WTC11 (cell line): ENCODE measurements at regions of chr17 and their contacts with region 1.

Region 1: GRCh38 chr17:47840740-47841603 is at the start of gene SCRN2:
- DNase-seq: peak; percentile 97
- ATAC-seq: peak; percentile 95
- H3K4me3 Mint-ChIP-seq: peak within 1 kb of the TSS; percentile 95
- H3K27ac Mint-ChIP-seq: peak within 1 kb of the TSS; percentile 80; the same call in 1 of the 2 replicates
- H3K4me1 Mint-ChIP-seq: peaks cover 41% of the 10 kb centered on the region
- H3K27me3 Mint-ChIP-seq: peaks cover 19% of the 10 kb centered on the region
- CTCF ChIP-seq: peak; percentile 87
- total RNA-seq, gene SCRN2: 50.8 to 54.1 TPM (median 51.6 TPM) in 3 replicates

Region 2: GRCh38 chr17:47810205-47810821 is 30.7 kb before region 1 on chr17:
- CTCF ChIA-PET with region 1: no interaction called
- POLR2A ChIA-PET with region 1: no interaction called
- DNase-seq: peak; percentile 55
- ATAC-seq: peak; percentile 83
- H3K4me3 Mint-ChIP-seq: no peak overlapping the region
- H3K27ac Mint-ChIP-seq: no peak overlapping the region; the same call in 1 of the 2 replicates
- H3K4me1 Mint-ChIP-seq: peaks cover 6% of the 10 kb centered on the region
- H3K27me3 Mint-ChIP-seq: no peaks in the 10 kb centered on the region
- CTCF ChIP-seq: no peak

Region 3: DNA sequence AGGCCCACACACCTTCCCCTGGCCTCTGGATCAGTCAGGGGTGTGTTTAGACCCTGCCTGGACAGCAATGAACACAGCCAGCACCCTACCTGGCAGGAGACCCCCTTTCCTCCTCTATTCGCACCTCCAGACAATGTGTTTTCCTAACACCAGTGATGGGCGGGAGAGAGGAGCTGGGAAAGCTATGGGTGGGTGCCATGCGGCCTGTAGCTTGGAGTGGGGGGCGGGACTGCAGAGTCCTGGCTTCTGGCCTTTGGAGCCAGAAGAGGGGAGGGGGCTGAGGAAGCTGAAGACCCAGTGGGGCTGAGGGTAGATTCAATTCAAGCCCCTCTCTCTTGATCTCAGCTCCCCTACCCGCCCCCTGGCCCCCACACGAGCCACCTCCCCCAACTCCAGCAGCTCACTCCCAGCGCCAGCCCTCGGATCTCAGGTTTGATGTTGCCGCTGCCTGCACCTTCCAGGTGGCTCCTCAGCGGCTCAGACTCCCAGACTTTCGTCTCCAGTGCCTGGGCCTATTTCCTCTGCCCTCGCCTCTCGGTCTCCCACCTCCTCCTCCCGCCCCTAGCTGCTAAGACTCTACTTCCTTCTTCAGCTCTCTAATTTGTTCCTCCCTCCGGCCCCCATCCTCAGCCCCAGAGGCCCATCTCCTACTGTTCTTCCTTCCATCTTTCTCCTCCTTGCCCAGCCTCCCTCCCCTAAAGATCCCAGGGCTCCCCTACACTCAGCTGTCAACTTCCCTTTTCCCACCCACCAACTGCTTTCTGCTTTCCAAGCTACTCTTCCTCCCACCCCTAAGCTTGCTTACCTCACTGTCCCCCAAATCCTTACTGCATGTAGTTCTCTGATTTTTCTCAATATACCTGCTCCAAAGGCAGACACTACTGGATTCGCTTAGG is 16.8 kb after region 1 on chr17:
- CTCF ChIA-PET with region 1: interaction called, 58 read pairs
- POLR2A ChIA-PET with region 1: no interaction called
- DNase-seq: no peak
- ATAC-seq: peak; percentile 75
- H3K4me3 Mint-ChIP-seq: no peak overlapping the region
- H3K27ac Mint-ChIP-seq: no peak overlapping the region
- H3K4me1 Mint-ChIP-seq: peaks cover 42% of the 10 kb centered on the region
- H3K27me3 Mint-ChIP-seq: peaks cover 66% of the 10 kb centered on the region
- CTCF ChIP-seq: no peak

Region 4: GRCh38 chr17:47895856-47896671 is 55.1 kb after region 1 on chr17 and contains the start of gene SP2:
- CTCF ChIA-PET with region 1: interaction called, 1,122 read pairs
- POLR2A ChIA-PET with region 1: interaction called, 8 read pairs
- DNase-seq: peak; percentile 99
- ATAC-seq: peak; percentile 95
- H3K4me3 Mint-ChIP-seq: peak within 1 kb of the TSS; percentile 97
- H3K27ac Mint-ChIP-seq: peak within 1 kb of the TSS; percentile 96
- H3K4me1 Mint-ChIP-seq: peaks cover 37% of the 10 kb centered on the region
- H3K27me3 Mint-ChIP-seq: no peaks in the 10 kb centered on the region
- CTCF ChIP-seq: no peak
- total RNA-seq, gene SP2: 9.9 to 11.5 TPM (median 10.7 TPM) in 3 replicates

Region 5: DNA sequence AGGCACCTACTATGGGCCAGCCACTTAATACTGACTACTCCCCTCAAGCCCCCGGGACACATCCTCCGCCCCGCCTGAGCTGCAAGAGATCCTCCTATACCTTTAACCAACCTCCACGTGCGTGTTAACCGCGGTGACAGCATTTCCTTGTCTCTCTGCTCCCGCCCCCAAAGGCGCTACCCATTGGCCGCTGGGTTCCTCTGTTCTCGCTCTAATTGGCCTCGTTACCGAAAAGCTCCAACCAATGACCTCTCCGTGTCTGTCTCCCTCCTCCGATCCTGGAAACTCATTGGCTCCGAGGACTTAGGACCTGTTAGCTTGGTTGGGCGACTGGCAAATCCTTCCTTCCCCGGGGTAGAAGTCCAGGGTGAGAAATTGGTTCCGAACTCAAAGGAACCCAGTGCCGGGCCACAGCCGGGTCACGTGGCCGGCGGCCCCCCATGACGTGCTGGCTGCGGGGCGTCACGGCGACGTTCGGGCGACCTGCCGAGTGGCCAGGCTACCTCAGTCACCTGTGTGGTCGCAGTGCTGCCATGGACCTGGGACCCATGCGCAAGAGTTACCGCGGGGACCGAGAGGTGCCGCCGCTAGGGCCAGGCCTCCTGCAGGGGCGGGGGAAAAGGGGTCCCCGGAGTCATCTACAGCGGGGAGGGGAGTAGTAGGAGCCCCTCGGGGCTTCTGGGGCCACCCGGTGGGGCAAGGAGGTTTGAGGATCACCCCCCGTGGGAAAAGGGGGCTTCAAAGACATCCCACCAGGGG is 100.4 kb after region 1 on chr17 and contains the start of gene PNPO:
- CTCF ChIA-PET with region 1: interaction called, 29 read pairs
- POLR2A ChIA-PET with region 1: no interaction called
- DNase-seq: peak; percentile 90
- ATAC-seq: peak; percentile 99
- H3K4me3 Mint-ChIP-seq: peak within 1 kb of the TSS; percentile 80
- H3K27ac Mint-ChIP-seq: no peak within 1 kb of the TSS
- H3K4me1 Mint-ChIP-seq: peaks cover 14% of the 10 kb centered on the region
- H3K27me3 Mint-ChIP-seq: peaks cover 30% of the 10 kb centered on the region
- CTCF ChIP-seq: no peak
- total RNA-seq, gene PNPO: 12.2 to 17.8 TPM (median 17.2 TPM) in 3 replicates

Region 6: GRCh38 chr17:47957591-47958428 is 116.8 kb after region 1 on chr17 and contains the start of gene PRR15L:
- CTCF ChIA-PET with region 1: interaction called, 13 read pairs
- POLR2A ChIA-PET with region 1: no interaction called
- DNase-seq: peak; percentile 66
- ATAC-seq: peak; percentile 80
- H3K4me3 Mint-ChIP-seq: peak within 1 kb of the TSS; percentile 45
- H3K27ac Mint-ChIP-seq: peak within 1 kb of the TSS; percentile 70
- H3K4me1 Mint-ChIP-seq: peaks cover 29% of the 10 kb centered on the region
- H3K27me3 Mint-ChIP-seq: peaks cover 15% of the 10 kb centered on the region
- CTCF ChIP-seq: no peak
- total RNA-seq, gene PRR15L: 0.59 to 1.1 TPM (median 1.1 TPM) in 3 replicates

Region 7: GRCh38 chr17:47978324-47978723 is 137.4 kb after region 1 on chr17:
- CTCF ChIA-PET with region 1: interaction called, 10 read pairs
- POLR2A ChIA-PET with region 1: no interaction called
- DNase-seq: peak; percentile 87
- ATAC-seq: peak; percentile 94
- H3K4me3 Mint-ChIP-seq: no peak overlapping the region
- H3K27ac Mint-ChIP-seq: no peak overlapping the region
- H3K4me1 Mint-ChIP-seq: no peaks in the 10 kb centered on the region
- H3K27me3 Mint-ChIP-seq: no peaks in the 10 kb centered on the region
- CTCF ChIP-seq: peak; percentile 78; the same call in 1 of the 2 replicates